Natural killer cell (primary cell): ENCODE measurements at regions of chr12 and their contacts with region 1.

Region 1: DNA sequence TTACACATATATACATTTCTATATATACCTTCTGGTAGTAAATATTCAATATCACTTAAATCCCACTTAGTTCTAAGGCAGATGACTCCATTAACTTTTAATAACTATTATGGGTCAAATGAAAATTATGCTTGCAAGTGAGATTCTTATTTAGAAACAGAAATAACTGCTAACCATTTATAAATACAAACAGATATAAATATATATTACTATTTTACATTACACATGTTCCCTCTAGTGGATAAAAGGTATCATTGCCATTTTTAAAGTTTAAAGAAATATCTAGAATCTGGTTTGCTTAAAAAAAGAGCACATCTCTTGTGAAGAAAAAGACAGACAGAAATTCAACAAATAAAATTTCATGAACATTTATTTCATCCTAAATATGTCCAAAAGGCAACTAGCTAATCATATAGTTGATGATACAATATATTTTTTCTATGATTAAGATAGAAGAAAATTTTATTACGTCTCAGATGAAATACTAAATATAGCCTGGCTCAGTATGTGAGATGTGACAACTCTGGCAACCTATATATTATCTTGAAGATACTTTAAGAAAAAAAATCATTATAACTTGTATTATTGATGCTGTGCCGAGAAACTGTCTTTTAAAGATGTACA is 11.7 kb upstream of the RAD51AP1 start:
- DNase-seq: peak in 1 of 2 donors; percentile 32
- ATAC-seq: no peak
- H3K4me3 ChIP-seq: no peak overlapping the region
- H3K4me3 Mint-ChIP-seq: no peak overlapping the region
- H3K27ac ChIP-seq: no peak overlapping the region
- H3K27ac Mint-ChIP-seq: no peak overlapping the region
- H3K4me1 ChIP-seq: no peaks in the 10 kb centered on the region
- H3K4me1 Mint-ChIP-seq: no peaks in the 10 kb centered on the region
- H3K27me3 ChIP-seq: no peaks in the 10 kb centered on the region
- H3K27me3 Mint-ChIP-seq: no peaks in the 10 kb centered on the region
- CTCF ChIP-seq: peak; percentile 76

Region 2: GRCh38 chr12:3885277-3886094 is 641.5 kb before region 1 on chr12:
- intact Hi-C with region 1: loop called (anchors 2 kb)
- DNase-seq: peak in 1 of 2 donors; percentile 83
- ATAC-seq: peak in 2 of 3 donors; percentile 57 to 62
- H3K4me3 ChIP-seq: no peak overlapping the region
- H3K4me3 Mint-ChIP-seq: no peak overlapping the region
- H3K27ac ChIP-seq: no peak overlapping the region
- H3K27ac Mint-ChIP-seq: no peak overlapping the region
- H3K4me1 ChIP-seq: no peaks in the 10 kb centered on the region
- H3K4me1 Mint-ChIP-seq: peaks cover 5 to 6% of the 10 kb centered on the region in 2 donors
- H3K27me3 ChIP-seq: no peaks in the 10 kb centered on the region
- H3K27me3 Mint-ChIP-seq: peaks cover 6 to 13% of the 10 kb centered on the region in 2 donors
- CTCF ChIP-seq: peak; percentile 78

Region 3: DNA sequence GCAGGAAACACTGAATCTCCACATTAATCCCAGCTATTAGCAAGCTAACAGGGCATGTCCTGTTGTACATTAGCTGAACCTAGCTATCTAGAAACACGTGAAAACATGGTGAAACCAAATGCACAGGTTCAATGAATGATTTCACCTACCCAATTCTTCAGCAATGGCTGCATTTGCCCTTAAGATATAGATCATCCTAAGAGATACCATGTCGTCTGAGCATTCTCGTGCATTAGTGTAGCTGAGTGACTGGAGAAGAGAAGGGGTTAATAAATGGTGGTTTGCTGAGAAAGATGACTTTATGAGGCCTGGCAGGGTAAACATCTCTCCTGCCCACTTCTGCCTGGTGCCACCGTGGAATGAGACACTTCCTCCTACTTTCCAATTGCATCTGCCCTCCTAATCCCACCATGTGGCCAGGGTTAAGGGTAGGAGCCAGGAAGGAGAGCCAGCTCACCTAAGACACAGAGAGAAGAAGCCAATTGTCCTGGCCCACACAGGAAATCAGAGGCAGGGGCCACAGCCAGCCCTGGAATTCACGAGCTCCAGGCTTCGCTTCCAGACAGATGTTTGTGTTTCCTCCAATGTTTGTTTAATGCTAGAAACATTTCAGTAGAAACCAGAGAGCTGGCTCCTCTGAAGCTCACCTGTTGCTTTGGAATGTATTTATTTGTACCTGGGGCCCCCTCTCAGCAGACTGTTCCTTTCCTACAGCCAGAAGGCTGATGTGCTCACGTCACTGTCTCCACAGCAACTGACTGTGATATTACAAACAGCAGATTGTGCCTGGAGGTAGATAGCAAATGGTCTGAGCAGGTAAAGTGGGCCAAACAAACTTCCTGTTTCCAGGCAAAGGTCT is 527.8 kb before region 1 on chr12:
- intact Hi-C with region 1: loop called (anchors 2 kb)
- DNase-seq: peak in 1 of 2 donors; percentile 60
- ATAC-seq: no peak
- H3K4me3 ChIP-seq: no peak overlapping the region
- H3K4me3 Mint-ChIP-seq: no peak overlapping the region
- H3K27ac ChIP-seq: no peak overlapping the region
- H3K27ac Mint-ChIP-seq: no peak overlapping the region
- H3K4me1 ChIP-seq: no peaks in the 10 kb centered on the region
- H3K4me1 Mint-ChIP-seq: no peaks in the 10 kb centered on the region
- H3K27me3 ChIP-seq: no peaks in the 10 kb centered on the region
- H3K27me3 Mint-ChIP-seq: peaks cover 2 to 13% of the 10 kb centered on the region in 2 donors
- CTCF ChIP-seq: no peak

Region 4: DNA sequence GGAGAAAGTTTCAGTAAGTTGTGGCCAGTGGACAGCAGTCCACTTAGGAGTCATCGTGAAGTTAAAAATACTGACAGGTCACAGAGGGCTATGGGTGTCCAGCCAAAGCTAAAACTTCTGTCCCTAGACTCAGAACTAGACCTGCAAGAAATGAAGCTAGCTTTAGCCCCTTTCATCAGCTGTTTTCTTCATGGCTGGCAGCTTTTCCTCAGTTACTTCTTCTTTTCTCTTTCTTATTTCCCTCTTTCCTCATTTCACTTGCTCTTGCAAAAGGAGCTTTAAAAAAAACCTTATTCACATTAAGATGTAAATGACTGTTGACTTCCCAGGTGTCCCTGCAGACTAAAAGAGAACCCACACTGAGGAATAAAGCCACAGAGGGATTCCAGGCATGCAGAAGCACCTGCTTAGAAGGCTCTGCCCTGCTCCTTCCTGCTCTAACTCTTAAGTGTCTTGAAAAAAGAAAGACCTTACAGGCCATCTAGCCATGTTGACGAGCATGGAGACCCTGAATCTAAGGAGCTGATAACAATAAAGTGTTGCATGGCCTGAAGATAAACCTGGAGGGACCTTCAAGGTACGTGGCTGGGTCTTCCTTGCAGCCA is 323.2 kb before region 1 on chr12:
- intact Hi-C with region 1: no loop called
- DNase-seq: no peak
- ATAC-seq: no peak
- H3K4me3 ChIP-seq: no peak overlapping the region
- H3K4me3 Mint-ChIP-seq: no peak overlapping the region
- H3K27ac ChIP-seq: no peak overlapping the region
- H3K27ac Mint-ChIP-seq: no peak overlapping the region
- H3K4me1 ChIP-seq: peaks cover 33% of the 10 kb centered on the region
- H3K4me1 Mint-ChIP-seq: peaks cover 36 to 46% of the 10 kb centered on the region in 2 donors
- H3K27me3 ChIP-seq: no peaks in the 10 kb centered on the region
- H3K27me3 Mint-ChIP-seq: peaks cover 0 to 3% of the 10 kb centered on the region in 2 donors
- CTCF ChIP-seq: no peak

Region 5: GRCh38 chr12:4421590-4422031 is 105.4 kb before region 1 on chr12:
- intact Hi-C with region 1: loop called (anchors 5 kb)
- DNase-seq: peak in 1 of 2 donors; percentile 72
- ATAC-seq: peak in 2 of 3 donors; percentile 52 to 61
- H3K4me3 ChIP-seq: no peak overlapping the region
- H3K4me3 Mint-ChIP-seq: no peak overlapping the region
- H3K27ac ChIP-seq: no peak overlapping the region
- H3K27ac Mint-ChIP-seq: no peak overlapping the region
- H3K4me1 ChIP-seq: no peaks in the 10 kb centered on the region
- H3K4me1 Mint-ChIP-seq: no peaks in the 10 kb centered on the region
- H3K27me3 ChIP-seq: no peaks in the 10 kb centered on the region
- H3K27me3 Mint-ChIP-seq: peaks cover 9 to 11% of the 10 kb centered on the region in 2 donors
- CTCF ChIP-seq: peak; percentile 77

Region 6: GRCh38 chr12:4604684-4605193 is 77.7 kb after region 1 on chr12:
- intact Hi-C with region 1: no loop called
- DNase-seq: peak; percentile 64 to 88
- ATAC-seq: peak; percentile 97 to 99 (median 98)
- H3K4me3 ChIP-seq: peak overlapping the region; percentile 84
- H3K4me3 Mint-ChIP-seq: peak overlapping the region; percentile 99
- H3K27ac ChIP-seq: peak overlapping the region; percentile 28
- H3K27ac Mint-ChIP-seq: peak overlapping the region; percentile 81 to 87
- H3K4me1 ChIP-seq: no peaks in the 10 kb centered on the region
- H3K4me1 Mint-ChIP-seq: peaks cover 16 to 17% of the 10 kb centered on the region in 2 donors
- H3K27me3 ChIP-seq: no peaks in the 10 kb centered on the region
- H3K27me3 Mint-ChIP-seq: peaks cover 14 to 19% of the 10 kb centered on the region in 2 donors
- CTCF ChIP-seq: peak; percentile 98